Mammary epithelial cell (primary cell): ENCODE measurements at regions of chr2 and their contacts with region 1.

Region 1: DNA sequence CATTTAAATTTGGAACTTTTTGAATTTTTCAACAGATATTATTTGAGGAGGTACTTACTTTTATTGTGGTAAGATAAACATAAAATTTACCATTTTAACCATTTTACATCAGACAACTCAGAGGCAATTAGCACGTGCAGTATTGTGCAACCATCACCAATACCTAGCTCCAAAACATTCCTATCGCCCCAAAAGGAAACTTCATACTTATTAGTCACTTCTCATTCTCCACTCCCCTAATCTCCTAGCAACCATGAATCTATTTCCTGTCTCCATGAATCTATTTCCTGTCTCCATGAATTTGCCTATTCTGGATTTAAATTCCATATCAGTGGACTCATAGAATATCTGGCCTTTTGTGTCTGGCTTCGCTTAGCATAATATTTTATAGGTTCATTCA is 69.9 kb upstream of the FAM136A start:
- DNase-seq: peak; percentile 90
- H3K4me3 ChIP-seq: no peak overlapping the region
- H3K27ac ChIP-seq: peak overlapping the region; percentile 95
- H3K4me1 ChIP-seq: peaks cover 22% of the 10 kb centered on the region
- H3K27me3 ChIP-seq: no peaks in the 10 kb centered on the region
- CTCF ChIP-seq: no peak

Region 2: GRCh38 chr2:70270323-70270722 is 101.4 kb before region 1 on chr2:
- CTCF ChIA-PET with region 1: no interaction called
- dilution Hi-C with region 1: no loop called
- in situ Hi-C with region 1: no loop called
- intact Hi-C with region 1: no loop called
- DNase-seq: no peak
- H3K4me3 ChIP-seq: no peak overlapping the region
- H3K27ac ChIP-seq: no peak overlapping the region
- H3K4me1 ChIP-seq: no peaks in the 10 kb centered on the region
- H3K27me3 ChIP-seq: no peaks in the 10 kb centered on the region
- CTCF ChIP-seq: no peak

Region 3: GRCh38 chr2:70388128-70388527 is 16.4 kb after region 1 on chr2:
- CTCF ChIA-PET with region 1: no interaction called
- dilution Hi-C with region 1: no loop called
- in situ Hi-C with region 1: no loop called
- intact Hi-C with region 1: loop called (anchors 1 kb)
- DNase-seq: peak; percentile 96
- H3K4me3 ChIP-seq: no peak overlapping the region
- H3K27ac ChIP-seq: peak overlapping the region; percentile 88
- H3K4me1 ChIP-seq: peaks cover 51% of the 10 kb centered on the region
- H3K27me3 ChIP-seq: no peaks in the 10 kb centered on the region
- CTCF ChIP-seq: no peak